CD8-positive, alpha-beta T cell (primary cell): ENCODE measurements at regions of chr2 and their contacts with region 1.

Region 1: DNA sequence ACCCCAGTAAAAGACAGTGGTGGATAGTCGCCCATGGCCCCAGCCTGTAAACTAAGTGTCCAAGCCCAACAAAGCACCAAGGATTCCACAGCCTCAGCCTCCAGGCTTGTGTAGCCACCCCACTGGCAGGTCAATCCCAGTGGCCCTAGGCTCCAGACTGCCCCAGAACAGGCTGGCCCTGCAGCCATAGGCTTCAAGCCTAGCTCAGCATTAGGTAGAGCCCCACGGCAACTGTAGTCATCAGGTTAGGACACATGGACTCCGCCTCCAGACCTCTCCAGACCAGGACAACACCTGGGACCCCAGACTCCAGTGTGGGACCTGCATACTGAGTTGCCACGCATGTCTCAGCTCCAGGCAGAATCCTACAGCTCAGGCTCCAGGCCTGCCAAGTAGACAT is 1590.6 kb upstream of the DDX18 start:
- DNase-seq: no peak
- ATAC-seq: no peak
- H3K4me3 ChIP-seq: no peak overlapping the region
- H3K4me3 Mint-ChIP-seq: no peak overlapping the region
- H3K27ac ChIP-seq: no peak overlapping the region
- H3K27ac Mint-ChIP-seq: no peak overlapping the region
- H3K4me1 ChIP-seq: no peaks in the 10 kb centered on the region
- H3K4me1 Mint-ChIP-seq: no peaks in the 10 kb centered on the region
- H3K27me3 ChIP-seq: no peaks in the 10 kb centered on the region
- H3K27me3 Mint-ChIP-seq: no peaks in the 10 kb centered on the region
- CTCF ChIP-seq: no peak

Region 2: DNA sequence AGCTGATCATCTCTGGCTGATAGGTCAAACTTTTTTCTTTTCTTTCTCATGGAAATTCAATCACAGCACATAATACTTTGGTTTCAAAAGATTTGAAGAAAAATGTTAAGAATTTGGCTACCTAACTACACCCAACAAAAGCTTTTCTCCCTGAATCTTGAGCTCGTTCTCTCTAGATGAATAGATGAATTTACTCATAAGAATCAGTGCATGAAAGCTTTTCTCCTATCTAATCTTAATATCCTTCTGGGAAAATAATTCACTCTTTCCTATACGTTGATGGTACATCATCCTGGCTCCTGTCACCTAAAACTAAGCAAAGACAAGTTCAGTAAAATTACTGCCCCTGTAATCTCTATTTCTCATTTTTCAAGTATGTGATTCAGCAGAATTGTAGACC is 302.4 kb before region 1 on chr2:
- CTCF ChIA-PET with region 1: no interaction called
- POLR2A ChIA-PET with region 1: no interaction called
- intact Hi-C with region 1: no loop called
- DNase-seq: no peak
- ATAC-seq: no peak
- H3K4me3 ChIP-seq: no peak overlapping the region
- H3K4me3 Mint-ChIP-seq: no peak overlapping the region
- H3K27ac ChIP-seq: no peak overlapping the region
- H3K27ac Mint-ChIP-seq: no peak overlapping the region
- H3K4me1 ChIP-seq: no peaks in the 10 kb centered on the region
- H3K4me1 Mint-ChIP-seq: no peaks in the 10 kb centered on the region
- H3K27me3 ChIP-seq: no peaks in the 10 kb centered on the region
- H3K27me3 Mint-ChIP-seq: no peaks in the 10 kb centered on the region
- CTCF ChIP-seq: no peak

Region 3: GRCh38 chr2:116211719-116212118 is 12.2 kb before region 1 on chr2:
- CTCF ChIA-PET with region 1: no interaction called
- POLR2A ChIA-PET with region 1: no interaction called
- intact Hi-C with region 1: loop called in 1 of 2 experiments (anchors 1 kb)
- DNase-seq: no peak
- ATAC-seq: no peak
- H3K4me3 ChIP-seq: no peak overlapping the region
- H3K4me3 Mint-ChIP-seq: no peak overlapping the region
- H3K27ac ChIP-seq: no peak overlapping the region
- H3K27ac Mint-ChIP-seq: no peak overlapping the region
- H3K4me1 ChIP-seq: no peaks in the 10 kb centered on the region
- H3K4me1 Mint-ChIP-seq: no peaks in the 10 kb centered on the region
- H3K27me3 ChIP-seq: no peaks in the 10 kb centered on the region
- H3K27me3 Mint-ChIP-seq: no peaks in the 10 kb centered on the region
- CTCF ChIP-seq: no peak

Region 4: GRCh38 chr2:116238511-116238910 is 14.6 kb after region 1 on chr2:
- CTCF ChIA-PET with region 1: no interaction called
- POLR2A ChIA-PET with region 1: no interaction called
- intact Hi-C with region 1: no loop called
- DNase-seq: no peak
- ATAC-seq: no peak
- H3K4me3 ChIP-seq: no peak overlapping the region
- H3K4me3 Mint-ChIP-seq: no peak overlapping the region
- H3K27ac ChIP-seq: no peak overlapping the region
- H3K27ac Mint-ChIP-seq: no peak overlapping the region
- H3K4me1 ChIP-seq: no peaks in the 10 kb centered on the region
- H3K4me1 Mint-ChIP-seq: no peaks in the 10 kb centered on the region
- H3K27me3 ChIP-seq: no peaks in the 10 kb centered on the region
- H3K27me3 Mint-ChIP-seq: no peaks in the 10 kb centered on the region
- CTCF ChIP-seq: no peak

Region 5: DNA sequence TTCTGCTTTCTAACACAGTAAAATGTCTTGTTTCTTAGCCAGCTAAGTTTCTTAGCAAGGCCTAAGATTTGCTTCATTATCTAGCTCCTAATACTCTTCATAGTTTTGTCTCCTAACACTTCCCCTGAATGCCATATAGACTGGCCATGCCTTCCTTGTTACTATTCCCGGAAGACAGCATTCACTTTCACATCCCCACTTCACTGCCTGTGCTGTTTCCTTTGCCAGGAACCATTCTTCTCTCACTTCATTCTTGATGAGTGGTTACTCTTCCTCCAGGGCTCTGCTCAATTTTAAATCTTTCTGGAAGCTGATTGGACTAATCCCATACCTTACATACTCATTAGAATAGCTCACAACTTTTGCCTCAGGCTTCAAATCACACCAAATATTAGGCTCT is 80.4 kb after region 1 on chr2:
- CTCF ChIA-PET with region 1: no interaction called
- POLR2A ChIA-PET with region 1: no interaction called
- intact Hi-C with region 1: no loop called
- DNase-seq: no peak
- ATAC-seq: no peak
- H3K4me3 ChIP-seq: no peak overlapping the region
- H3K4me3 Mint-ChIP-seq: no peak overlapping the region
- H3K27ac ChIP-seq: no peak overlapping the region
- H3K27ac Mint-ChIP-seq: no peak overlapping the region
- H3K4me1 ChIP-seq: no peaks in the 10 kb centered on the region
- H3K4me1 Mint-ChIP-seq: no peaks in the 10 kb centered on the region
- H3K27me3 ChIP-seq: no peaks in the 10 kb centered on the region
- H3K27me3 Mint-ChIP-seq: no peaks in the 10 kb centered on the region
- CTCF ChIP-seq: no peak